Common myeloid progenitor, CD34-positive (primary cell): ENCODE measurements at regions of chr12 and their contacts with region 1.

Region 1: GRCh38 chr12:62813031-62813829 is 121.7 kb downstream of the PPM1H start:
- DNase-seq: peak; percentile 73 to 83 (median 79)
- H3K4me3 ChIP-seq: peak overlapping the region in 4 of 7 experiments; percentile 21 to 62 (median 54)
- H3K27ac ChIP-seq: peak overlapping the region in 1 of 2 experiments; percentile 11
- H3K4me1 ChIP-seq: peaks cover 5 to 62% (median 30%) of the 10 kb centered on the region in 4 experiments
- H3K27me3 ChIP-seq: no peaks in the 10 kb centered on the region

Region 2: GRCh38 chr12:62841846-62842245 is 28.6 kb after region 1 on chr12:
- CTCF ChIA-PET with region 1: interaction called, 30 read pairs
- POLR2A ChIA-PET with region 1: interaction called, 8 read pairs
- DNase-seq: peak; percentile 58 to 88 (median 78)
- H3K4me3 ChIP-seq: peak overlapping the region in 2 of 7 experiments; percentile 5 to 44
- H3K27ac ChIP-seq: no peak overlapping the region
- H3K4me1 ChIP-seq: peaks cover 6 to 53% (median 34%) of the 10 kb centered on the region in 4 experiments
- H3K27me3 ChIP-seq: no peaks in the 10 kb centered on the region

Region 3: GRCh38 chr12:62983599-62984022 is 170.4 kb after region 1 on chr12:
- CTCF ChIA-PET with region 1: interaction called, 17 read pairs
- POLR2A ChIA-PET with region 1: no interaction called
- DNase-seq: peak; percentile 58 to 73 (median 63)
- H3K4me3 ChIP-seq: no peak overlapping the region
- H3K27ac ChIP-seq: no peak overlapping the region
- H3K4me1 ChIP-seq: no peaks in the 10 kb centered on the region
- H3K27me3 ChIP-seq: no peaks in the 10 kb centered on the region